Activated CD8-positive, alpha-beta T cell treated with anti-CD3 and anti-CD28 coated beads, Interleukin-2, amount 10 ng/mL, durations not matched to agents 7 days and 5 days (primary cell): ENCODE measurements at regions of chr7 and their contacts with region 1.

Region 1: GRCh38 chr7:77247206-77247850 is 47.7 kb upstream of the FGL2 start:
- DNase-seq: peak; percentile 93
- ATAC-seq: peak; percentile 97
- H3K4me3 Mint-ChIP-seq: no peak overlapping the region
- H3K27ac Mint-ChIP-seq: no peak overlapping the region
- H3K4me1 Mint-ChIP-seq: peaks cover 11% of the 10 kb centered on the region
- H3K27me3 Mint-ChIP-seq: no peaks in the 10 kb centered on the region

Region 2: GRCh38 chr7:77188731-77189437 is 58.4 kb before region 1 on chr7:
- CTCF ChIA-PET with region 1: interaction called, 14 read pairs
- POLR2A ChIA-PET with region 1: no interaction called
- DNase-seq: no peak
- ATAC-seq: no peak
- H3K4me3 Mint-ChIP-seq: no peak overlapping the region
- H3K27ac Mint-ChIP-seq: no peak overlapping the region
- H3K4me1 Mint-ChIP-seq: peaks cover 18% of the 10 kb centered on the region
- H3K27me3 Mint-ChIP-seq: no peaks in the 10 kb centered on the region

Region 3: DNA sequence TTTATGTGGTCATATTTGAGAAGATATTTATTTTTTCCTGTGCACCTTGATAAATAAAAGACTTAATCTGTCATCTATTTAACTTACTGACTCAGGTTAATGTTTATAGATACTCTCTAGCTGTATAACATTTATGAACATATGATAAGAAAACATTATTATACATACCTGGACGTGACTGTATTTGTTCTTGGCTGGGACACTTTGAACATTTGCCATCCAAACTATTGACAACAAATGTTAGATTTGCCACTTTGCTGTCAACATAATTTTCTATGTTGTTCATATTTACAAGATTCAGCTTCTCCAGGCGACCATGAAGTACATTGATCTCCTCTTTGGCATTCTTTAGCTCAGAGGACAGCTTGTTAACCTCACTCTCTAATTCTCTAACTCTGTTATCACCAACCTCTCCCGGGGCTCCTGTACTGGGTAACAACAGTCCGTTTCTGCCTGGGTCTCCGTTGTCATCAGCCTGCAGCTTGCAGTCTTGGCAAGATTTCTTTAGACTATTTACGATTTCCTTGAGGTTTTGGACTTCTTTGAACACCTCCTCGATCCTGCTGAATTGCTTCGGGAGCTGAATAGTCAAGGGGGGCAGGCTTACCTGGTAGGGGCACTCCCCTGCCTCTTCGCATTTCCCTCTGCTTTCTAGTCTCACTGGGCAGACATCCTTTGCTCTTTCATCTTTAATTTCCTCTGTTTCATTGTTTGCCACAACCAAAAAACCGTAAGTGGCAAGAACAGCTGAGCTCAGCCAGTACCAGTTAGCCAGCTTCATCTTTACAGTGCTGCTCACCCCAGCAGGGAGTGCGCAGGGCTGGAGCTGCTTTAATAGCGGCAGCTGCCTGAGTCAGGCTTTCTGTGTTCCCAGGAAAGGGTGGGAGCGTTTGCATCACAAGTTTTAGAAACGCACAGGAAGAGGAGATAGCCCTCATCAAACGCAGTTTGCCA is 48.0 kb before region 1 on chr7 and contains the start of gene FGL2:
- CTCF ChIA-PET with region 1: interaction called, 46 read pairs
- POLR2A ChIA-PET with region 1: interaction called, 5 read pairs
- DNase-seq: peak; percentile 47
- ATAC-seq: peak; percentile 88
- H3K4me3 Mint-ChIP-seq: peak within 1 kb of the TSS; percentile 79
- H3K27ac Mint-ChIP-seq: peak within 1 kb of the TSS; percentile 75
- H3K4me1 Mint-ChIP-seq: peaks cover 51% of the 10 kb centered on the region
- H3K27me3 Mint-ChIP-seq: no peaks in the 10 kb centered on the region
- total RNA-seq, gene FGL2: 1.6 TPM

Region 4: DNA sequence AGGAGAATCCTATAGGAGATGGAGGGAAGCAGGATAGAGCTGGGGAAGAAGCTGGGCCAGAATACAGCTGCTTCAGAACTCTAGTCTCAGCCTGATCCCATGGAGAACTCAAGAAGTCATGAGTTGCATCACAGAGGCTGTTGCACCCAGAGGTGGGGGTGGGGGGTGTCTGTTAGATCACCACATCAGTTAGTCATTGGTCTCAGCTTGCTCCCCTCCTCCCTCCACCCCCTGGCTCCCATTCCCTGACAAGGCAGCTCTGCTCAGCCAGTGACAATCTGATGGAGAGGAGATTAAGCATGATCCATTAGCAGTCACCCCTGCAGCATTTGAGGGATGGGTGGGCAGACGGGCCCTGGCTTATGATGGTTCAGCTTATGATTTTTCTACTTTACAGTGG is 10.7 kb after region 1 on chr7:
- CTCF ChIA-PET with region 1: interaction called, 13 read pairs
- POLR2A ChIA-PET with region 1: no interaction called
- DNase-seq: no peak
- ATAC-seq: no peak
- H3K4me3 Mint-ChIP-seq: no peak overlapping the region
- H3K27ac Mint-ChIP-seq: no peak overlapping the region
- H3K4me1 Mint-ChIP-seq: no peaks in the 10 kb centered on the region
- H3K27me3 Mint-ChIP-seq: no peaks in the 10 kb centered on the region

Region 5: GRCh38 chr7:77331938-77332695 is 84.8 kb after region 1 on chr7:
- CTCF ChIA-PET with region 1: interaction called, 67 read pairs
- POLR2A ChIA-PET with region 1: interaction called, 3 read pairs
- DNase-seq: peak; percentile 70
- ATAC-seq: peak; percentile 91
- H3K4me3 Mint-ChIP-seq: no peak overlapping the region
- H3K27ac Mint-ChIP-seq: peak overlapping the region; percentile 55
- H3K4me1 Mint-ChIP-seq: peaks cover 54% of the 10 kb centered on the region
- H3K27me3 Mint-ChIP-seq: no peaks in the 10 kb centered on the region